CD4-positive, alpha-beta T cell (primary cell): ENCODE measurements at regions of chr20 and their contacts with region 1.

Region 1: DNA sequence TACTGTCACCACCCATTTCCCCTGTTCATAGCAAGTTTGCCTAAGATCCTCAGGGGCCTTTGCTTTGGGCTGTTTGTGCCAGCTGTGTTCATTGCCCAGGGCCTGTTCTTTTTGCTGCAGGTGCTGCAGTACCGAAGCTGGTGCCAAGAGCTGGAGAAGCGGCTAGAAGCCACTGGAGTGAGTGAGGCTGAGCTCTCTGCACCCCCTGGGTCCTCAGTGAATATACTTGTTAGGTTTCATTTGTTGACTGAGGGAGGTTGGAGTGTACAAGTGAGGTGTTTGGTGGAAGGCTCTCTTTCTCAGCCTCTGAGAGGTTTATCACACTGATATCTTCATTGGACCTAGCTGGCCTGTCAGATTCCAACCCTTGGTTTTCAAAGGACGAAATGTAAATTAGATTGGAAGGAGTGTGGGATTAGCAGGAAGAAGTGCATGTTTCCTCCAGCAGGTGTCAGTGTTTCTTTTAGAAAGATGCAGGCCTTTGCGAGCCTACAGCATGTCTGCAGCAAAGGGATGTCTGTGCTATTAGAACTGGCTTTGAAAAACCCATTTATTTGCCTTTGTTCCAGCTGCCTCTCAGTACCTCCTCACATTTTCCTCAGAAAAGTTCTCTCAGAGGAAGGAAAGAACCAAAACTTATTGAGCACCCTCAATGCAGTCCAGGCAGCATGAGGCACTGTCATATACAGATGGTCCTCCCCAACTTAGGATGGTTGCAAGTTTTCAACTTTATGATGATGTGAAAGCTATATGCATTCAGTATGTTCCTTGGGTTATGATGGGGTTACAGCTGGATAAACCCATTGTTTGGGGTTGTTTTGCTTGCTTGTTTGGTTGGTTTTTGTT is 8.3 kb downstream of the CEP250 start:
- DNase-seq: peak; percentile 14 to 80 (median 44)
- ATAC-seq: peak; percentile 97
- H3K4me3 ChIP-seq: no peak overlapping the region
- H3K4me3 Mint-ChIP-seq: no peak overlapping the region
- H3K27ac ChIP-seq: no peak overlapping the region
- H3K27ac Mint-ChIP-seq: peak overlapping the region; percentile 16
- H3K4me1 ChIP-seq: peaks cover 6% of the 10 kb centered on the region
- H3K4me1 Mint-ChIP-seq: peaks cover 7% of the 10 kb centered on the region
- H3K27me3 ChIP-seq: no peaks in the 10 kb centered on the region
- H3K27me3 Mint-ChIP-seq: no peaks in the 10 kb centered on the region
- CTCF ChIP-seq: peak; percentile 81

Region 2: DNA sequence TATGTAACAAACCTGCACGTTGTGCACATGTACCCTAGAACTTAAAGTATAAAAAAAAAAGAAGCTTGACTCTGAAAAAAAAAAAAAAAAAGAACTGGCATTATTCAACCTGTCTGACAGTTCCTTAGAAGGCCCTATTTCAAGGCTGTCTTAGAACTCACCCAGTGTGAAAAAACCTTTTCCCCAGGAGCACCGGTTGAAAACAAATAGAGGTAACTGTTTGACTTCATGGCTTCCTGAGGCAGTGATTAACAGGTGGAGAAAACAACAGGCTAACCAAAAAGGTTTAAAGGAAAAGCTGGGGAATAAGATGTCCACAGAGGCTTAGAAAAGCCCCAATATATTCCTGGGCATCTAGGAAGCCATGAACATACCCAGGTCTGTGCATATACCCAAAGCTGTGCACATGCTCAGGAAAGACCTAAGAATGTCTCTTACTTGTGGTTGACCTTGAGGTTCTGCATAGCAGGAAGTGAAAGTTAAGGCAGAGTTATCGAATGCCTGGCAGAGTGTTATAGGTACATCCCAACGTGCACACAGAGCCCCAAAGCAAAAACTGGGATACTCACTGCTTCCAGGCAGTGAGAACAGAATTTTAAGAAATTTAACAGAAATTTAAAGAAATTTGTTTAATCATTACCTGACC is 58.9 kb before region 1 on chr20:
- CTCF ChIA-PET with region 1: no interaction called
- POLR2A ChIA-PET with region 1: no interaction called
- intact Hi-C with region 1: no loop called
- DNase-seq: peak in 3 of 14 experiments; percentile 28 to 35 (median 32)
- ATAC-seq: peak; percentile 44
- H3K4me3 ChIP-seq: no peak overlapping the region
- H3K4me3 Mint-ChIP-seq: no peak overlapping the region
- H3K27ac ChIP-seq: no peak overlapping the region
- H3K27ac Mint-ChIP-seq: no peak overlapping the region
- H3K4me1 ChIP-seq: peaks cover 6% of the 10 kb centered on the region
- H3K4me1 Mint-ChIP-seq: peaks cover 22% of the 10 kb centered on the region
- H3K27me3 ChIP-seq: no peaks in the 10 kb centered on the region
- H3K27me3 Mint-ChIP-seq: no peaks in the 10 kb centered on the region
- CTCF ChIP-seq: no peak

Region 3: DNA sequence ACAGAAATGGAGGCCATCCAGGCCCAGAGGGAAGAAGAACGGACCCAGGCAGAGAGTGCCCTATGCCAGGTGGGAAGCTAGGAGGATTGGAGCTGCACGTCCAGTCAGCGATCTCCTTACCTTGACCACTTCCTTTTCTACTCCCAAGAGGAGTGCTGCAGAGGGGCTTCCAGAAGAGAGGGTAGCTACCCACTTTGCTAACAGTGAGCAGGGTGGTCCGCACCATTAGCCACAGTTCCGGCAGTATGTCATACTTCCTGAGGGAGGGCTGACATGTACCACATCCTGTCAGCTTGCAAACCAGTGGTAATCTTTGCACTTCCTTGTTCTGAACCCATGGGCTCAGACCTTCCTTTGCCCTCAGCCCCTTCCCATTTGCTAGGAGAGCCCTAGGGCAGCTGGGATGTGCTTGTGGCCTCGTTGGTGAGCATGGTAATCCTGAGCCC is 27.1 kb after region 1 on chr20:
- CTCF ChIA-PET with region 1: interaction called, 3 read pairs
- POLR2A ChIA-PET with region 1: interaction called, 7 read pairs
- intact Hi-C with region 1: loop called (anchors 2 to 5 kb)
- DNase-seq: peak; percentile 41 to 89 (median 59)
- ATAC-seq: peak; percentile 99
- H3K4me3 ChIP-seq: peak overlapping the region; percentile 94
- H3K4me3 Mint-ChIP-seq: peak overlapping the region; percentile 100
- H3K27ac ChIP-seq: peak overlapping the region; percentile 63 to 87
- H3K27ac Mint-ChIP-seq: peak overlapping the region; percentile 98
- H3K4me1 ChIP-seq: peaks cover 59% of the 10 kb centered on the region
- H3K4me1 Mint-ChIP-seq: peaks cover 72% of the 10 kb centered on the region
- H3K27me3 ChIP-seq: no peaks in the 10 kb centered on the region
- H3K27me3 Mint-ChIP-seq: no peaks in the 10 kb centered on the region
- CTCF ChIP-seq: no peak

Region 4: DNA sequence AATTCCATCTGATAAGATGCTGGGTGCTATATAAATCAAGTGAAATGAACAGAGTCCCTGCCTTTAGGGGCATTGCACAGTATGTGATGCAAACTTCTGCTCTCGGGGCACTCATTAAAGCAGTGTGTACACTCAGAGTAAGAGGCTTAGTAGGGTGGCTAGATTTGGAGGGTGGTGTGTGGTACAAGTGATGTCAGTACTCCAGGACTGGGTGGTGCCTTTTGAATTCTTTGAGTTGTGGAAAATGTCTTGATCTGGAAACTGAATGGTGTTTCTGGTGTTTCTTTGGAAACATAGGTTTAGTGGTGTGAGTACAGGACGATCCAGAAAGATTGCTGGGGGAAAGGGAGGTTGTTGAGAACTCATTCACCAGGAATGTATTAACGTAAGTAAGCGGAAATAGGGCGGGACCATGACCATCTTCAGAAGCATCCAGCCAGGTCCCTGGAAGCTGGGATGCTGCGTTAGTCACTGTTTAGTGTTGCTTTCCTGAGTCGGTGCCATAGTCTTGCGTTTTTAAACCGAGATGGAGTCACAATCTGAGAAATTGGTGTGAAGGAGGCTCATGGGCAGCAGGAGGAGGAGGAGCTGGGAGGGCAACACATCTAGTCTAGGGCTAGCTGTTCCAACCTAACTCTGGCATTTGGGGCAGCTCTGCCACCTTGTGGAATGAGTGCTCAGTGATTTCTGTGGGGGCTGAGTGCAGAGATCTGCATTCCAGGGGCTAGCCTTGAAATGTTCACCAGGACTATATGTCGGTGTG is 420.3 kb after region 1 on chr20:
- CTCF ChIA-PET with region 1: interaction called, 6 read pairs
- POLR2A ChIA-PET with region 1: no interaction called
- intact Hi-C with region 1: loop called (anchors 1 kb)
- DNase-seq: peak; percentile 35 to 75 (median 52)
- ATAC-seq: peak; percentile 91
- H3K4me3 ChIP-seq: no peak overlapping the region
- H3K4me3 Mint-ChIP-seq: no peak overlapping the region
- H3K27ac ChIP-seq: no peak overlapping the region
- H3K27ac Mint-ChIP-seq: peak overlapping the region; percentile 43
- H3K4me1 ChIP-seq: peaks cover 5% of the 10 kb centered on the region
- H3K4me1 Mint-ChIP-seq: peaks cover 16% of the 10 kb centered on the region
- H3K27me3 ChIP-seq: no peaks in the 10 kb centered on the region
- H3K27me3 Mint-ChIP-seq: no peaks in the 10 kb centered on the region
- CTCF ChIP-seq: peak; percentile 77

Region 5: DNA sequence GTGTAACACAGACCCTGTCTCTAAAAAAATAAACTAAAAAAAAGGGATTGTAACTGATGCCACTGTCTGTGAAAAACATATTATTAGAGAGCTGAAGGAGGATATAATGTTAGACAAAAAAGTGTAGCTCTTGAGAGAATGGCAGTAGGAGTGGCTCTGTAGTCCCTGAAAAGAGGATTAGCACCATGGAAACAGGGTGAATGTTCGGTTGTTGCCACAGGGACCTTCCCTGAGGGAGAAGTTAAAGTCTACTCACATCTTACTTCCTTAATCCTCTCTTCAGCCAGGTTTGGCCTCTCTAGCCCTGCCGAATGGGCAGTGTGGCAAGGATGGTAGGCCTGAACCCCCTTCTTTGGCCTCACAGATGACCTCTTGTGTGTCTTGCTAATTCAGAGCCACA is 478.6 kb after region 1 on chr20:
- CTCF ChIA-PET with region 1: no interaction called
- POLR2A ChIA-PET with region 1: no interaction called
- intact Hi-C with region 1: loop called in 1 of 2 experiments (anchors 5 kb)
- DNase-seq: no peak
- ATAC-seq: no peak
- H3K4me3 ChIP-seq: no peak overlapping the region
- H3K4me3 Mint-ChIP-seq: no peak overlapping the region
- H3K27ac ChIP-seq: no peak overlapping the region
- H3K27ac Mint-ChIP-seq: peak overlapping the region; percentile 47
- H3K4me1 ChIP-seq: peaks cover under 1% of the 10 kb centered on the region
- H3K4me1 Mint-ChIP-seq: peaks cover 7% of the 10 kb centered on the region
- H3K27me3 ChIP-seq: no peaks in the 10 kb centered on the region
- H3K27me3 Mint-ChIP-seq: no peaks in the 10 kb centered on the region
- CTCF ChIP-seq: no peak

Region 6: GRCh38 chr20:36132802-36133211 is 669.1 kb after region 1 on chr20:
- CTCF ChIA-PET with region 1: no interaction called
- POLR2A ChIA-PET with region 1: no interaction called
- intact Hi-C with region 1: loop called in 1 of 2 experiments (anchors 10 kb)
- DNase-seq: no peak
- ATAC-seq: no peak
- H3K4me3 ChIP-seq: no peak overlapping the region
- H3K4me3 Mint-ChIP-seq: no peak overlapping the region
- H3K27ac ChIP-seq: no peak overlapping the region
- H3K27ac Mint-ChIP-seq: no peak overlapping the region
- H3K4me1 ChIP-seq: no peaks in the 10 kb centered on the region
- H3K4me1 Mint-ChIP-seq: no peaks in the 10 kb centered on the region
- H3K27me3 ChIP-seq: no peaks in the 10 kb centered on the region
- H3K27me3 Mint-ChIP-seq: no peaks in the 10 kb centered on the region
- CTCF ChIP-seq: no peak